ENCODE measurements at regions of chr3 and their contacts with region 1.

Region 1: GRCh38 chr3:10798600-10799358 is 17.2 kb upstream of the SLC6A11 start:
- DNase-seq: no peak

Region 2: DNA sequence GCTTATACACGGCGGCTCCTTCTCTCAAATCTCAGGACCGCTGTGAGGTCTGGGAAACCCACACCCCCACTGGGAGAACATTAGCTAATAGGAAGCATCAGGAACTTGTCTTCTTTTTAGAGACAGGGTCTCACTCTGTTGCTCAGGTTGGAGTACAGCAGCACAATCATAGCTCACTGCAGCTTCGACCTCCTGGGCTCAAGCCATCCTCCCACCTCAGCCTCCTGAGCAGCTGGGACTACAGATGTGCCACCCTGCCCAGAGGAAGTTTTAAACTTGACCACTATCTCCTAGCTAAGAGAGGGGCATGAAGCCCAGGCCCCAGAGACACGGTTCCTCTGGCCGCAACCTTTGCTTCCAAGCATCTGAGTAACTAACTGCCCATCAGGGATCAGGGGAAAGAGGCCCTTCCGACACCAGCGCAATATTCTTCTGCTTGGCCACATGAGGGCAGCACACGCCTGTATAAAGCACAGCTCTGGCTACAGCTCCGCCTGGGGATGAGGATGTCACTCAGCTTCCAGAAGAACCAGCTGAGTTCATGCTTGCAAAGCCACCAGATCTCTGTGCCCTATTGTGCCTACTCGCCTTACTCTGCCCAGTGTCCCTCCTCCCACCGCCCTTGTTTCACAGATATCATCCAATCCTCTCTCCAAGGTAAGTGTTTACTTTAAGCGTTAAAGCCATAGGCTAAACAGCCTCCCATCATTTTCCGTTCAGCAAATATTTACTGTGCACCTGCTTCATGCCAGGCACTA is 40.3 kb before region 1 on chr3:
- intact Hi-C with region 1: no loop called
- DNase-seq: no peak

Region 3: DNA sequence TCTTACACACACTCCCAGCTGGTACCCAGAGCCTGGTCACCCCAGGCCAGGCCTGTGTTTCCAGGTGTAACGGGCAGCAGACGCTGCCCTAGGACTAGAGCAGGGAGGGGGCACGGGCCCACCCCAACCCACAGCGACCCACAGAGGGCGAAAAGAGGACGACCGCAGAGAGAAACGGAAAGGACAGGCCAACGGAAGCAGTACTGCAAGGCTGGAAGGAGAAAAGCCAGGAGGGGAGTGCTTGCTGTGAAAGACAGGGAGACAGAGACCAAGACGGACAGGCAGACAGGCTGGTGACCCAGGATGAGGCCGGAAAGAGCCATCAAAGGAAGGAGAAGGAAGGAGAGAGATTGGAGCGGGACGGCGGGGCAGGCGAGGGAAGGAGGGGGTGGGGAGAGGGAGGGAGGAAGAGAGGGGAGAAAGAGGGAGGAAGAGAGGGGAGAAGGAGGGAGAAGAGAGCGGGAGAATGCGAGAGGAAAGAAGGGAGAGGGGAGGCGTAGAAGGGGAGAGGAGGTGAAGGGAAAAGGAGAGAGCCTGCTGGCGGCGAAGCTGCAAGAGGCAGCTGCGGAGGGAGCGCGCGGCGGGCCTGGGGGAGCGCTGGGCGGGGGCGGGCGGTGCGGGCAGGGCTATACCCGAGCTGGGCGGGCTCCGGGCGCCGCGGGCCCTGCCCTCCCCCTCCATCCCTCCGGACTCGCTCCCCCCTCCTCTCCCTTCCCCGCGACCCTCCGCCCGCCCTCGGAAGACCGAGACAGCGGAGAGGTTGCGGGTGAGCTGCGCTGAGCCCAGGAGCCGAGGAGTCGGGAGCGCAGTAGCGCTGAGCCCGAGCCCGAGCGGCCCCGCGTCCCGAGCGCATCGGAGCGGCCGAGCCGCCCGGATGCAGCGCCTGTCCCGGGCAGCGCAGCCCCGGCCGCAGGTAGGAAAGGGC is 193.5 kb after region 1 on chr3 and contains the start of gene SLC6A1:
- intact Hi-C with region 1: loop called in 1 of 2 experiments (anchors 5 kb)
- DNase-seq: no peak
- total RNA-seq, gene SLC6A1: 1.2 to 1.3 TPM

Measured in posterior vena cava (tissue), 2 donors.